Activated CD4-positive, alpha-beta memory T cell treated with anti-CD3 and anti-CD28 coated beads for 36 hours (primary cell): ENCODE measurements at regions of chr6 and their contacts with region 1.

Region 1: GRCh38 chr6:2841264-2842138 is at the start of gene SERPINB1:
- DNase-seq: peak; percentile 96
- H3K4me3 Mint-ChIP-seq: peak within 1 kb of the TSS; percentile 86
- H3K27ac Mint-ChIP-seq: peak within 1 kb of the TSS; percentile 93
- H3K4me1 Mint-ChIP-seq: peaks cover 67% of the 10 kb centered on the region
- H3K27me3 Mint-ChIP-seq: no peaks in the 10 kb centered on the region
- total RNA-seq, gene SERPINB1: 164 to 169 TPM

Region 2: GRCh38 chr6:2765166-2765895 is 76.2 kb before region 1 on chr6 and contains the start of gene WRNIP1:
- CTCF ChIA-PET with region 1: interaction called, 13 read pairs
- POLR2A ChIA-PET with region 1: interaction called, 13 read pairs
- intact Hi-C with region 1: loop called (anchors 2 kb)
- DNase-seq: peak; percentile 98
- H3K4me3 Mint-ChIP-seq: peak within 1 kb of the TSS; percentile 92
- H3K27ac Mint-ChIP-seq: peak within 1 kb of the TSS; percentile 97
- H3K4me1 Mint-ChIP-seq: peaks cover 45% of the 10 kb centered on the region
- H3K27me3 Mint-ChIP-seq: no peaks in the 10 kb centered on the region
- total RNA-seq, gene WRNIP1: 32.7 to 32.8 TPM

Region 3: GRCh38 chr6:2820415-2820814 is 21.1 kb before region 1 on chr6:
- CTCF ChIA-PET with region 1: no interaction called
- POLR2A ChIA-PET with region 1: interaction called, 3 read pairs
- intact Hi-C with region 1: loop called (anchors 2 kb)
- DNase-seq: no peak
- H3K4me3 Mint-ChIP-seq: no peak overlapping the region
- H3K27ac Mint-ChIP-seq: peak overlapping the region; percentile 53
- H3K4me1 Mint-ChIP-seq: peaks cover 35% of the 10 kb centered on the region
- H3K27me3 Mint-ChIP-seq: no peaks in the 10 kb centered on the region

Region 4: GRCh38 chr6:2900821-2901644 is 59.5 kb after region 1 on chr6:
- CTCF ChIA-PET with region 1: interaction called, 53 read pairs
- POLR2A ChIA-PET with region 1: interaction called, 29 read pairs
- intact Hi-C with region 1: no loop called
- DNase-seq: no peak
- H3K4me3 Mint-ChIP-seq: peak overlapping the region; percentile 99
- H3K27ac Mint-ChIP-seq: peak overlapping the region; percentile 95
- H3K4me1 Mint-ChIP-seq: peaks cover 41% of the 10 kb centered on the region
- H3K27me3 Mint-ChIP-seq: no peaks in the 10 kb centered on the region

Region 5: GRCh38 chr6:2931970-2932748 is 90.7 kb after region 1 on chr6:
- CTCF ChIA-PET with region 1: interaction called, 109 read pairs
- POLR2A ChIA-PET with region 1: interaction called, 22 read pairs
- intact Hi-C with region 1: loop called (anchors 1 kb)
- DNase-seq: peak; percentile 93
- H3K4me3 Mint-ChIP-seq: peak overlapping the region; percentile 28
- H3K27ac Mint-ChIP-seq: peak overlapping the region; percentile 77
- H3K4me1 Mint-ChIP-seq: peaks cover 26% of the 10 kb centered on the region
- H3K27me3 Mint-ChIP-seq: no peaks in the 10 kb centered on the region

Region 6: GRCh38 chr6:3202999-3203696 is 361.6 kb after region 1 on chr6:
- CTCF ChIA-PET with region 1: no interaction called
- POLR2A ChIA-PET with region 1: no interaction called
- intact Hi-C with region 1: no loop called
- DNase-seq: no peak
- H3K4me3 Mint-ChIP-seq: no peak overlapping the region
- H3K27ac Mint-ChIP-seq: no peak overlapping the region
- H3K4me1 Mint-ChIP-seq: peaks cover 7% of the 10 kb centered on the region
- H3K27me3 Mint-ChIP-seq: peaks cover 30% of the 10 kb centered on the region

Region 7: DNA sequence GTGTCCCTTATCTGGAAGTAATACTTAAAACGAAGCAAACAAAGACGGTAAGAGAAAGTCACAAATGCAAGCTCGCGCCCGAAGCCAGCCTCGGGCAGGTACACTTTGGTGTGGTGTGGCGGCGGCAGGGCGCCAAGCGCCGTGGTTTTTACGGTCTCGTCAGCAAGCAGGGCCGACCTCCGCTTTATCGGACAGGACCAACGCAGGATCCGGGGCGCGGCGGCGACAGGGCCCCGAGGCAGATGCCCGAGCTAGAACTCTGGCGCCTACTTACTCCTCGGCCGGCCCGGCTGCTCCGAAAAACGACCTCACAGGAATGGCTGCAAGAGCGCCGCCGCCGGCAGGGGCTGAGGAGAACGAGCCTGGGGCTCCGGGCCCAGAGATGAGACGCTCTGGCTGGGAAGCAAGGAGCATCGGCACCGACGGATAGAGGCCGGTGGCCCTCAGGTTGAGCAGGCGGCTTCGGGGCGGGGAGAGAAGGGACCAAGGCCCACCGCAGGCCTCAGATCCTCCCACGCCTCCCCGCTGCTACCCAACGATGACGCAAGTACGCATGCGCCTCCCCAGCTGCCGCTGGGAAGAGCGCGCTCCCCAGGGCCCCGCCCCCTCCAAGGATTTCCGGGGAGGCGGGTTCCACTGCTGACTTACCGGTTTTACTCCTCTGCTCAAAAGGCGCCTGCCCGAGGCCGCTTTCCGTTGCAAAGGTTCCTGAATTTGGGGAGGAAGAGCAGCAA is 1176.8 kb after region 1 on chr6:
- CTCF ChIA-PET with region 1: no interaction called
- POLR2A ChIA-PET with region 1: no interaction called
- intact Hi-C with region 1: loop called (anchors 10 kb)
- DNase-seq: peak; percentile 98
- H3K4me3 Mint-ChIP-seq: peak overlapping the region; percentile 90
- H3K27ac Mint-ChIP-seq: peak overlapping the region; percentile 97
- H3K4me1 Mint-ChIP-seq: peaks cover 63% of the 10 kb centered on the region
- H3K27me3 Mint-ChIP-seq: no peaks in the 10 kb centered on the region